Sciatic nerve (tissue), 2 donors: ENCODE measurements at regions of chr6 and their contacts with region 1.

Region 1: GRCh38 chr6:116144605-116145004 is 18.7 kb upstream of the COL10A1 start:
- DNase-seq: no peak
- ATAC-seq: peak; percentile 53

Region 2: DNA sequence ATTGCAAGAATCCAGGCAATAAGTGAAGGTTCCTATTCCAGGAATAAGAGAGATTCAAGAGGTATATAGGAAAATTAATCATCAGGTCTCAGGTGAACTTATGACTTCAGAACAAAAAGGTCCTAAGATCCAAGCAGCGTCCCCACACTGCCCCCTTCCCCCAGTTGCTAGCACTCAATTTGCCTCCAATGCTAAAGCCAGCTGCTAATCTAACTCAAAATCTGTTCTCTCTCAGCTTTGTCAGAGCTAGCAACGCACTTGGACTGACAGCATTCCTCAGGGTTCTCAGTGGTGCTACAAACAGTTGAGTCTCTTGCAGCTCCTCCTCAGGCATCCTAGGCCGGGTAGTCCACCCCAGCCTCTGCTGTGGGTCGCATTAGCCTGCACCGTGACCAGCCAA is 880.7 kb after region 1 on chr6:
- intact Hi-C with region 1: loop called (anchors 10 kb)
- DNase-seq: no peak
- ATAC-seq: no peak